Dendritic cell treated with granulocyte-macrophage colony-stimulating factor and Interleukin-4, amounts not matched to agents 40 ng/mL and 50 ng/mL, for 4 days (primary cell): ENCODE measurements at regions of chr9 and their contacts with region 1.

Region 1: DNA sequence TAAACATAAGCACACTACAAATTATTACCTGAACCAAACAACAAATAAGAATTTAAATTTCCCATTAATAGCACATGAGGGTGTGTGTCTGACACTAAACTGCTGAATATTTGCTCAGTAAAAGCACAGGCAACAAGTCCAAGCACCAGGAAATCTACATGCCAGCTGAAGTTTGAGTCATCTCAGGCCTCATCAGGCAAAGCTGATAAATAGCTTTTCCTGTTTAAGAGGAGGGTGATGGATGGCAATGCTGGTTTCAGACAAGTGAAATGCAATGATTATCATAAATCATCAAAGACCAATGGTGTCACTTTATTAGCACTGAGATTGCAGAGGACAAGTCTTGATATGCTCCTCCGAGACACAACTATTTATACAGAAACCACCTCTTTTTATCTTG is 1668.0 kb upstream of the C9orf72 start:
- H3K4me3 Mint-ChIP-seq: no peak overlapping the region
- H3K27ac Mint-ChIP-seq: no peak overlapping the region
- H3K4me1 Mint-ChIP-seq: no peaks in the 10 kb centered on the region
- H3K27me3 Mint-ChIP-seq: no peaks in the 10 kb centered on the region

Region 2: DNA sequence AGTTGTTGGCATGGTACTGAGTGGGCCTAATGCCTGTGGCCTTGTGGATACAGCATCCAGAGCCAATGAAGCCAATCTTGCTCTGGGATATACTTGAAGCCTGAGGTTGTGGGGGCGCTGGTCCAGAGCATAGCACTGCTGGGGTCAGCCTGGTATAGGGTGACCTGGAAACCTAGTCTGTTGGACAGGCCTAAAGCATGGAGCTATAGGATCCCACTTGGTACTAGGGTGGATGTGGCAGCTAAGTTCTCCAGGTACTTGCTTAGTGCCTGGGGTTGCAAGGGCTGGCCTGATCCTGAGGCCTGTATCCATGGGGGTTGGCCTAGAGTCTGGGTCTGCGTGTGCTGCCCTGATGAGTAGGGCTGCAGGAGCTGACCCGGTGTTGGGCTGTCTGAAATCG is 499.9 kb before region 1 on chr9:
- intact Hi-C with region 1: no loop called
- H3K4me3 Mint-ChIP-seq: no peak overlapping the region
- H3K27ac Mint-ChIP-seq: no peak overlapping the region
- H3K4me1 Mint-ChIP-seq: no peaks in the 10 kb centered on the region
- H3K27me3 Mint-ChIP-seq: no peaks in the 10 kb centered on the region

Region 3: DNA sequence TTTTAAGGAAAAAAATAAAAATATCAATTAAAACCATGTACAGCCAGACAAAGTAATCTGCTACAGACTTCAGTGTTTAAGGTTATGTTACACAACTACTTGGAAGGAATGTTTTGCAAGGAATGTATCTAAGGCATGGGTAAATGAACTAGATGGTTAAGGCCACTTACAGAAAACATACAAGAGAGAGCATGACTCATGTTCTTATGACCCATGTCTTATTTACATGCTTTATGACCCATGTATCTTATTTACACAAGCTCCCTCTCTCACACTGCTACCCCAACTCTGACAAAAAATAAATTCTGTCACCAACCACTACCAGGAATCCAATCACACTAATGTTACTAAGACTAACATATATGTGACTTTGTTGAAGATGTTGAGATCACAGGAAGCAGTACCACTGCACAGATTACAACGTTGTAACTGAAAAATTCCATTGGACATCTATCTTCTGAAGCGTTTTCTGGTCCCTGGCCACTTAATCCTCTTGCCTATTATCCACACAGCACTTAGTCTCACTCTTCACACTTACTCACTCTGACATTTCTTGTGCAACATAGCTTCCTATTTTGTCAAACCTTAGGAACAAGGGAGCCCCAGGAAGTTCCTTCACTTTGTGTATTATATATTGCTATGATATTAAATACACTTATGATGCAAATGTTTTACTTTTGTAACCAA is 37.9 kb before region 1 on chr9:
- intact Hi-C with region 1: no loop called
- H3K4me3 Mint-ChIP-seq: no peak overlapping the region
- H3K27ac Mint-ChIP-seq: no peak overlapping the region
- H3K4me1 Mint-ChIP-seq: no peaks in the 10 kb centered on the region
- H3K27me3 Mint-ChIP-seq: no peaks in the 10 kb centered on the region

Region 4: GRCh38 chr9:29285818-29286217 is 44.5 kb after region 1 on chr9:
- intact Hi-C with region 1: no loop called
- H3K4me3 Mint-ChIP-seq: no peak overlapping the region
- H3K27ac Mint-ChIP-seq: no peak overlapping the region
- H3K4me1 Mint-ChIP-seq: peaks cover 21% of the 10 kb centered on the region
- H3K27me3 Mint-ChIP-seq: no peaks in the 10 kb centered on the region

Region 5: GRCh38 chr9:29311221-29311620 is 69.9 kb after region 1 on chr9:
- intact Hi-C with region 1: no loop called
- H3K4me3 Mint-ChIP-seq: no peak overlapping the region
- H3K27ac Mint-ChIP-seq: no peak overlapping the region
- H3K4me1 Mint-ChIP-seq: no peaks in the 10 kb centered on the region
- H3K27me3 Mint-ChIP-seq: no peaks in the 10 kb centered on the region

Region 6: DNA sequence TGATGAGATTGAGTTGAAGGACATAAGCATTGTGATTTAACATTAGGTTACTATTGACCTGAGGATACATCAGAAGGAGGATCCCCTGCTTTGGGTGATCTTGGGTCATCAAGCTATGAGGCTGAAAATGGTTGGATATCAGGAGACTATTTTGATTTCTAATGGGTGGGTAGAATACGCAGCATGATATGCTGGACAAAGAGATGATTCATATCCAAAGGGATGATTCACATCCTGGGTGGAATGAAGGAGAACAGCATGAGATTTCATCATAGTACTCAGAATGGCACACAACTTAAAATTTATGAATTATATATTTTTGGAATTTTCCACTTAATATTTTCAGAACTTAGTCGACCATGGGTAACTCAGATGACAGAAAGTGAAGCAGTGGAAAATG is 91.5 kb after region 1 on chr9:
- intact Hi-C with region 1: loop called (anchors 10 kb)
- H3K4me3 Mint-ChIP-seq: no peak overlapping the region
- H3K27ac Mint-ChIP-seq: no peak overlapping the region
- H3K4me1 Mint-ChIP-seq: no peaks in the 10 kb centered on the region
- H3K27me3 Mint-ChIP-seq: no peaks in the 10 kb centered on the region